ENCODE measurements at regions of chr11 and their contacts with region 1.

Region 1: GRCh38 chr11:61482513-61482912 is 26.0 kb upstream of the LRRC10B start:
- DNase-seq: no peak
- H3K4me3 ChIP-seq: no peak overlapping the region
- H3K27ac ChIP-seq: no peak overlapping the region
- H3K4me1 ChIP-seq: peaks cover 13% of the 10 kb centered on the region
- H3K27me3 ChIP-seq: no peaks in the 10 kb centered on the region
- CTCF ChIP-seq: peak in 2 of 3 experiments; percentile 6 to 24
- POLR2A ChIP-seq: no peak

Region 2: DNA sequence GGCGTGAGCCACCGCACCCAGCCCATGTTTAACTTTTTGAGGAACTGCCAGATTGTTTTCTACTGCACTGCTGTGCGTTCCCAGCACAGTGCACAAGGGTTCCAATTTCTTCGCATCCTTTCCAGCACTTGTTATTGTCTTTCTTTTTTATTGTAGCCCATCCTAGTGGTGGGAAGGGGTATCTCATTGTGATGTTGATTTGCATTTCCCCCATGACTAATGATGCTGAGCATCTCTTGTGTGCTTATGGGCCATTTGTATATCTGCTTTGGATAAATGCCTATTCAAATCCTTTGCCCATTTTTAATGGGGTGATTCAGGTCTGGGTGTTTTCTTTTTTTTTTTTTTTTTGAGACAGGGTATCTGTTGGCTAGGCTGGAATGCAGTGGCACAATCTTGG is 135.0 kb after region 1 on chr11:
- intact Hi-C with region 1: no loop called
- DNase-seq: no peak
- H3K4me3 ChIP-seq: no peak overlapping the region
- H3K27ac ChIP-seq: no peak overlapping the region
- H3K4me1 ChIP-seq: no peaks in the 10 kb centered on the region
- H3K27me3 ChIP-seq: no peaks in the 10 kb centered on the region
- CTCF ChIP-seq: no peak
- POLR2A ChIP-seq: no peak

Region 3: DNA sequence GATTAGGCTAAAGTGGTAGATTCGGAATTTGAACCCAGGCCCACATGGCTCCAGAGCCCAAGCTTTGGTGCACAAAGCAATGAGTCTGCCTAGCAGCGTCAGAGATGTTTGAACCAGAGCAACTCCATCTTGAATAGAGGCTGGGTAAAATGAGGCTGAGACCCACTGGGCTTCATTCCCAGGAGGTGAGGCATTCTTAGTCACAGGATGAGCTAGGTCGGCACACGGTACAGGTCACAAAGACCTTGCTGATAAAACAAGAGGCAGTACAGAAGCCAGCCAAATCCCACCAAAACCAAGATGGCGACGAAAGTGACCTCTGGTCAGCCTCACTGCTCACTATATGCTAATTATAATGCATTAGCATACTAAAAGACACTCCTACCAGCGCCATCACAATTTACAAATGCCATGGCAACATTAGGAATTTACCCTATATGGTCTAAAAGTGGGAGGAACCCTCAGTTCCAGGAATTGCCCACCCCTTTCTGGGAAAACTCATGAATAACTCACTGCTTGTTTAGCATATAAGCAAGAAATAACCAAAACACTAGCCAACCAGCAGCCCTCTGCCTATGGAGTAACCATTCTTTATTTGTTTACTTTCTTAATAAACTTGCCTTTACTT is 157.4 kb after region 1 on chr11:
- intact Hi-C with region 1: loop called (anchors 10 kb)
- DNase-seq: no peak
- H3K4me3 ChIP-seq: no peak overlapping the region
- H3K27ac ChIP-seq: no peak overlapping the region
- H3K4me1 ChIP-seq: no peaks in the 10 kb centered on the region
- H3K27me3 ChIP-seq: no peaks in the 10 kb centered on the region
- CTCF ChIP-seq: no peak
- POLR2A ChIP-seq: no peak